Activated CD4-positive, alpha-beta memory T cell treated with anti-CD3 and anti-CD28 coated beads for 36 hours (primary cell): ENCODE measurements at regions of chr4 and their contacts with region 1.

Region 1: GRCh38 chr4:38730830-38731646 is 51.8 kb downstream of the TLR10 start:
- DNase-seq: peak; percentile 90
- H3K4me3 Mint-ChIP-seq: no peak overlapping the region
- H3K27ac Mint-ChIP-seq: no peak overlapping the region
- H3K4me1 Mint-ChIP-seq: peaks cover 14% of the 10 kb centered on the region
- H3K27me3 Mint-ChIP-seq: no peaks in the 10 kb centered on the region

Region 2: DNA sequence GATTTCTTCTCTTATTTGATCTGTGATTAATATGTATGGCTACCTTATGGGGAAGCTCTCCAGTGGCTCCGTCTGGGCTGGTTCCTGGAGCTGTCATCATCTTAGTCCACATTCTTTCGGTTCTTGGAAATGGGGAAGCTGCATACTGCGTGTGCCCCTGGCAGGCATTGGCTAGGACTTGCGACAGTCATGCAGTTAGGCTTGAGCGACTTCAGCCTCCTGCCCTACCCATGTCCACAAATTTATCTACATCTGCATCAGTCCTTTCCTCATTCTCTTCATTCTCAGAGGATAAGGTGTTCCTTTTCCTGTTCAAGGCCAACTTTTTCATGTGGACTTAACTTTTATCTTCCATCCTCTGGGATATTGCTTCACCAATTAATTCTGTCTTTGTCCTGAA is 1259.1 kb before region 1 on chr4:
- CTCF ChIA-PET with region 1: no interaction called
- POLR2A ChIA-PET with region 1: no interaction called
- intact Hi-C with region 1: no loop called
- DNase-seq: no peak
- H3K4me3 Mint-ChIP-seq: no peak overlapping the region
- H3K27ac Mint-ChIP-seq: no peak overlapping the region
- H3K4me1 Mint-ChIP-seq: no peaks in the 10 kb centered on the region
- H3K27me3 Mint-ChIP-seq: peaks cover 11% of the 10 kb centered on the region

Region 3: DNA sequence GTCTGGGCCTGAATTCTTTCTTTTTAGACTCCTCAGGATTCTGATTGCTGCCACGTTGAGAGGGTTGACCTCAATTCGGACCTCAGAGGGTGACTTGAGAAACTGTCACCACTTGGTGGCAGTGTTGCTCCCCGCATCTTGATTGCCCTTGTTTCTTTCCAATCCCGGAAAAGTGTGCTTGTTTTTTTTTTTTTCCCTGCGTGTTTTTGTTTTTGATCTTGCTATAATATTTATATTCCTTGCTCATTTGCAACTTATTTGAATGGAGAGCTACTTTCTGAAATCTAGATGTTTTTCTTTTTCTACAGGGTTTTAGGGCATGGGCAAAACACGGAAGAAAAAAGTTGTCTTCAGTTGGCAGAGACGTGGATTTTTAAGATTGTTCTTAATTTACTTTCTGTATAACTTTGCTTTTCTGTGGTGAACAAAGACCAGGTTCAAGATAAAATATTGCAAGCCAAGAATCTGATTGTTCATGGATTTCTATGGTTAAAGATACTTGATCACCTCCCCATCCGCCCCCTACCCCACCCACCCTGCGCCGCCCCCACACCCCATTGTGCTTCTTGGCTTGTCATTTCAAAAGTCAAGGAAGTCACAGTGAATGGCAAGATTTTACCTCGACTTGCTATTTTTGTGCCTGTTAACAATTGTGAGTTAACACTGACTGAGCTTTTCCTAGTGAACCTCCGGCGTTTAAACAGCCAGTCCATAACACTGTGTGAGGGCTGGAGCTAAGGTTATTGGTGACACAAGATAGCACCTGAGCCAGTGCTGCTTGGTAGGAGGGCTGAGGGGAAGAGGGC is 668.7 kb before region 1 on chr4:
- CTCF ChIA-PET with region 1: interaction called, 8 read pairs
- POLR2A ChIA-PET with region 1: no interaction called
- intact Hi-C with region 1: loop called (anchors 1 kb)
- DNase-seq: peak; percentile 80
- H3K4me3 Mint-ChIP-seq: peak overlapping the region; percentile 77
- H3K27ac Mint-ChIP-seq: peak overlapping the region; percentile 70
- H3K4me1 Mint-ChIP-seq: peaks cover 14% of the 10 kb centered on the region
- H3K27me3 Mint-ChIP-seq: no peaks in the 10 kb centered on the region

Region 4: GRCh38 chr4:38069271-38069760 is 661.7 kb before region 1 on chr4:
- CTCF ChIA-PET with region 1: interaction called, 11 read pairs
- POLR2A ChIA-PET with region 1: no interaction called
- intact Hi-C with region 1: no loop called
- DNase-seq: peak; percentile 55
- H3K4me3 Mint-ChIP-seq: no peak overlapping the region
- H3K27ac Mint-ChIP-seq: peak overlapping the region; percentile 52
- H3K4me1 Mint-ChIP-seq: peaks cover 27% of the 10 kb centered on the region
- H3K27me3 Mint-ChIP-seq: no peaks in the 10 kb centered on the region